HepG2 (cell line): ENCODE measurements at regions of chr6 and their contacts with region 1.

Region 1: DNA sequence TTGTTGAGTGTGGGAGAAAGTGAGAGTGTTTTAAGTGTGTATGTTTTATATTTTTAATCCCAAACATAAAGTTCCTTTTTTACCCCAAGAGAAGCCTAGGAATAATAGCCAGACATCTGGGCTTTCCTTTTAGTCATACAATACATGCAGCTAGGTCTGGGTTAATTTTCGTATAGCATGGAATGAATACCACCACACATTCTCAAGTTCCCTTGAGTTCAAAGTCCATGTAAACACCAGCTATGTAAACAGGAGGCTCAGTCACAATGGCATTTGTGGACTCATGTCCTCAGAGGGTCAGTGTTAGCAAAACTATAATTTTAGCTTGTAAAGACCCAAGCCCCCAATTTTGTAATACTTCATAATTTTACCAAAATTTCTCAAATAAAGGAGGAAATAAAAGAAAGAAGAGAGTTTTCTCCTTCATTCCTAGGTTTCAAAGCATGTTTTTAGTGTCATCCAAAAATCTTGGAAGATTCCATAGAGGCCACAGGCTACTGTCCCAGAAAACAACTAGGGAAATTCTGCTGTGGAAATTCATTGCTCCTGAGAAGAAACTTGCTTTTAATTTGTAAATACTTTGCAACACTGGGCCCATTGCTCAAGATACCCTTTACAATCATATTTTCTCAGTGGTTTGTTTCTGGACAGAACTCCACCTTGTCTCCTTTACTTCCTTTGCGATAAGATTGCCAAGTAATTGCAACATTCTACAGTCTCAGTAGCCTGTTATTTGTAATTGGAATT is 671.2 kb downstream of the COL12A1 start:
- DNase-seq: peak; percentile 99
- ATAC-seq: peak; percentile 100
- H3K4me3 ChIP-seq: peak overlapping the region in 2 of 3 experiments; percentile 27 to 48; a peak in 4 of 6 replicates
- H3K27ac ChIP-seq: peak overlapping the region; percentile 95
- H3K4me1 ChIP-seq: peaks cover 40% of the 10 kb centered on the region
- H3K27me3 ChIP-seq: no peaks in the 10 kb centered on the region
- CTCF ChIP-seq: 0 out of 2 replicates have a peak, but pooled peaks have one; percentile 19
- EP300 ChIP-seq: peak; percentile 92 to 97
- POLR2A ChIP-seq: peak in 1 of 2 experiments; percentile 43; a peak in 1 of 4 replicates
- RAD21 ChIP-seq: peak; percentile 35; the same call in 1 of the 2 replicates

Region 2: GRCh38 chr6:73394577-73395354 is 1139.9 kb before region 1 on chr6 and contains the start of gene DDX43:
- CTCF ChIA-PET with region 1: no interaction called
- POLR2A ChIA-PET with region 1: no interaction called
- in situ Hi-C with region 1: no loop called
- intact Hi-C with region 1: no loop called
- DNase-seq: no peak
- ATAC-seq: no peak
- H3K4me3 ChIP-seq: no peak within 1 kb of the TSS
- H3K27ac ChIP-seq: no peak within 1 kb of the TSS
- H3K4me1 ChIP-seq: no peaks in the 10 kb centered on the region
- H3K27me3 ChIP-seq: 0 out of 5 replicates have a peak, but pooled peaks cover 0 to 3% of the 10 kb centered on the region in 2 experiments
- CTCF ChIP-seq: no peak
- EP300 ChIP-seq: no peak
- POLR2A ChIP-seq: no peak
- RAD21 ChIP-seq: no peak
- total RNA-seq, gene DDX43: not detected in 2 replicates

Region 3: GRCh38 chr6:74519163-74519562 is 15.5 kb before region 1 on chr6:
- CTCF ChIA-PET with region 1: no interaction called
- POLR2A ChIA-PET with region 1: interaction called, 11 read pairs
- in situ Hi-C with region 1: no loop called
- intact Hi-C with region 1: no loop called
- DNase-seq: peak; percentile 5
- ATAC-seq: peak; percentile 70
- H3K4me3 ChIP-seq: no peak overlapping the region
- H3K27ac ChIP-seq: no peak overlapping the region
- H3K4me1 ChIP-seq: no peaks in the 10 kb centered on the region
- H3K27me3 ChIP-seq: no peaks in the 10 kb centered on the region
- CTCF ChIP-seq: no peak
- EP300 ChIP-seq: peak in 1 of 2 experiments; percentile 44; a peak in 1 of 4 replicates
- POLR2A ChIP-seq: no peak
- RAD21 ChIP-seq: no peak